AG04449 (cell line): ENCODE measurements at regions of chr1 and their contacts with region 1.

Region 1: GRCh38 chr1:20493839-20494608 is 8.0 kb upstream of the CAMK2N1 start:
- DNase-seq: peak; percentile 42
- H3K4me3 ChIP-seq: no peak overlapping the region
- CTCF ChIP-seq: peak; percentile 97

Region 2: GRCh38 chr1:19918057-19918456 is 576.0 kb before region 1 on chr1:
- CTCF ChIA-PET with region 1: interaction called, 25 read pairs
- POLR2A ChIA-PET with region 1: no interaction called
- DNase-seq: peak; percentile 49
- H3K4me3 ChIP-seq: no peak overlapping the region
- CTCF ChIP-seq: peak; percentile 86

Region 3: GRCh38 chr1:19988267-19989006 is 505.6 kb before region 1 on chr1:
- CTCF ChIA-PET with region 1: no interaction called
- POLR2A ChIA-PET with region 1: no interaction called
- DNase-seq: no peak
- H3K4me3 ChIP-seq: no peak overlapping the region
- CTCF ChIP-seq: no peak

Region 4: DNA sequence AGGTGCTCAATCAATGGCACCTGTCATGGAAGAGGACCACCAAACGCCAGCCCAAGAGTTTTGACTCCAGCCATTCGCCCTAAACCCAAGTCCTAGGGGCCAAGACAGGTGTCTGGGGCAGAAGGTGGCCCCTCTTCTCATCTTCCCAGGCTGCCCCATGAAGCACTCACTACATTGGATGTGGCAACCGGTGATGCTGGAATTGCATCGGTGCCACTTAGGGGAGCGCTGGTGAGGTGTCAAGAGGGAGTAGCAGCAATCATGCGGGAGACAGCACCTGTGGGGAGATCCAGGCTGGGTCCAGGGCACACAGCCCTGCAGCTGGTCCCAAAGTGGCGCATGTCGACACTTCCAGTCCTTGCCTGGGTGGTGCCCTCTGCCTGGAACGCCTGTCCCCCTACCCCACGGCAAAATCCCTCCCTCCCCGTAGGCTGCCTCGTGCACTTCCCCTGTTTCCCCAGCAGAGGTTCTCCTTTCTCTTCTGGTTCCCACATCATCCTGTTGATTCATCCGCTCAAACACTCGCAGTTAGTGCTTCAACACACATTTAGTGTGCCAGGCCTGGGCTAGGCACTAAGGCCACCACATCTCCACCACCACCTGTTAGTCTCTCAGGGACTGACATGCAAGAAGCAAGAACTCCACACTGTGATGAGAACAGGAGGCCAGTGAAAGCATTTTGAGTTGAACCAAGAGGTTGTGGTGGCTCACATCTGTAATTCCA is 393.2 kb before region 1 on chr1:
- CTCF ChIA-PET with region 1: interaction called, 11 read pairs
- POLR2A ChIA-PET with region 1: no interaction called
- DNase-seq: no peak
- H3K4me3 ChIP-seq: no peak overlapping the region
- CTCF ChIP-seq: peak; percentile 61

Region 5: DNA sequence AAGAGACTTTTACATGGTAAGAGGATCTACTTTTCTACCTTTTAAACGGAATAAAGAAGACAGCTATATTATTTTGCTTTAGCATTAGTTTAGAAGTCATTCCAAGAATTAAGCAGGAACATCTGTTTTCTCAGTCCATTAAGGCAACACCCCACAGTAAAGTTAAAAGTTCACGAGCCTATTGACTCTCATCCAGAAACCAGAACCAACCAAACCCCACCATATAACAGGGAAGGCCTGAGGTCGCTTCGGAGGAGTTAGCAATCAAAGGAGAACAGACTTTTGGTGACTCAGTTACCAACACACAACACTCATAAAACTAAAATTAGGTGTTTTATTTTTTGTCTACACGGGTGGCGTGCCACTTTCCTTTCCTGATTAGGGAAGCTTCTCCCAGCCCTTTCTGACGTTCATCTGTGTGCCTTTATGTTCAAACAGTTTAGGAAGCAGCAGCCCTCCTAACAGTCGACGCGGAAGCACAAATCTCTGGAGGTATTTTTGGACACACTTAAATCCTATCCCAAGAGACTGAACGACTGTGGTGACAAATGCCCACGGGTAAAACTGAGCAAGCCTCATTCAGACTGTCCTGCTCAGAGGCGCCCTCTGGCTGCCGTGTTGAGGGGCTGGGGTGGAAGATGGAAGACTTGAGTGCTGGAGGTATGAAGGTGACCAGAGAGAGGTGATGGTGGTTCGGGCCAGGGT is 299.1 kb before region 1 on chr1:
- CTCF ChIA-PET with region 1: interaction called, 15 read pairs
- POLR2A ChIA-PET with region 1: no interaction called
- DNase-seq: no peak
- H3K4me3 ChIP-seq: no peak overlapping the region
- CTCF ChIP-seq: peak; percentile 85

Region 6: DNA sequence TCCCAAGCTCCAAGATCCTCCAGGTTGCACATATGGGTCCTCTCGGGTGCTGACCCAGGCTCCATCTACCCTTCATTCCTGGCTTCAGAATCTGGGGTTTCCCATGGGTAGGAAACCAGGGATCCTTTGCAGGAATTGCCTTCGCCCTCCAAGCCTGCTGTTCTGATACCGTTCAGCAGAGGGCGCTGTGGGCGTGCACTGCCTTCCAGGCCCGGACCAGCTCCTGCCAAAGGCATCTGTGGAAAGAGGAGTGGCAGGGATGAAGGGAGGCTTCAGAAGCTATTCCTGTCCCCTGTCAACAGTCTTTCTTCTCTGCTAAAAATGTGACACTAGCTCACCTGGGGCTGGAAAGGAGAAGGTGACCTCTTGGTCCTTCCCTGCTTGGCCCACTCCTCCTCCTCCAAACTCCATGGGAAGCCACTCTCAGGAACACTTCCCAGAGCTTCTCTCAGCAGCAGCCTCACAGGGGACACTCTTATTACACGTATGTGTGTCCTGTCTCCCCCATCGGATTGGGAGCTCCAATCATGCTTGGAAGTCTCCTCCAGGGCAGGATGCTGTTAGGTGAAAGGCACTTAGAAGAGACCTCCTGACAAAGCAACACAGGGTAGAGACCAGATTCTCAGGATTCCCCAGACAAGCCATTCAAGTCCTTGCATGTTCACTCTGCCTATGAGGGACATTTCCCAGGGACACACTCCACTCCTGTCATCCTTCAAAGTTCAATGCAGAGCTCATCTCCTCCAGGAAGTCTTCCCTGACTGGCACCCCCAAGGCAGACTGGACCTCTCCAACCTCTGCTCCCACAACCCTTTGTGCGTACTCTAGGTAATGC is 132.0 kb before region 1 on chr1:
- CTCF ChIA-PET with region 1: interaction called, 202 read pairs
- POLR2A ChIA-PET with region 1: no interaction called
- DNase-seq: no peak
- H3K4me3 ChIP-seq: no peak overlapping the region
- CTCF ChIP-seq: peak; percentile 91

Region 7: DNA sequence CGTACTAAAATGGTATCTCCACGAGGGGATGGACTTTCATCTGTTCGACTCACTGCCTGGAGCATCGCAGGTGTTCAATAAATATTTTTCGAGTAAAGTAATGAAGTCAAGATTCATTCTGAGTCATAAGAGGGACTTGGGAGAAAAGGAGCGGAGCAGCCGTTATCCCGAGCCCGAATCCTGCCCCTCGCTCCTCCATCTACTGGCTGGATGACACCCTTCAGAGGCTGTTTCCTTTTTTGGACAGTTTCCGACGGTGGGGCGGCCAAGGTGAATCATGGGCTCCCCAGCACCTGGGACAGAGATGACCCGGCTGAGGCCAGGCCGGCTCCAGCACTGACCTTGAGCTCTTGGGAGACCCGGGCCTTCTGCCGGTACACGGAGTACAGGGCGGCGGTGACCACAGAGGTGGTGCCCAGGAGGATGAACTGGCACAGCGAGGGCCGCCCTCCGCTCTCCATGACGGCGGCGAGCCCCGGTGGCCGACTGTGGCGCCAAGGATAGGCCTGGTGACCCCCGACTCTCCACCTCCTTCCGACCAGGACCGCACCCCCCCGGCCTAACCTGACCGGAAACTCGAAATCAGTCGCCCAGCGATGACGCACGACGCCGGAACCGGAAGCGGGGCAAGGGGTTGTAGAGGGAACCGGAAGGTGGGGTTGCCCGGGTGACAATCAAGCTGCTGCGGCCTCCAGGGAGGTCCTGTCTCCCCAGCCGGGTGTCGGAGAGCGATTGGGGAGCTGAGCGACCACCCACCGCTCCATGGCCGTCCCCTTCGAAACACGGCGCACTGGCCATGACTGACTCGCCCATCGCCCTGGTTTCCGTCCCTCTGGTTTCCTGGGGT is 13.8 kb after region 1 on chr1 and contains the start of gene MUL1:
- CTCF ChIA-PET with region 1: interaction called, 36 read pairs
- POLR2A ChIA-PET with region 1: interaction called, 3 read pairs
- DNase-seq: peak; percentile 31
- H3K4me3 ChIP-seq: peak within 1 kb of the TSS; percentile 98
- CTCF ChIP-seq: no peak